ENCODE measurements at regions of chr4 and their contacts with region 1.

Region 1: GRCh38 chr4:25767877-25768725 is 94.7 kb downstream of the SEL1L3 start:
- DNase-seq: no peak
- H3K4me3 ChIP-seq: no peak overlapping the region
- CTCF ChIP-seq: peak; percentile 93

Region 2: GRCh38 chr4:25448379-25449109 is 319.6 kb before region 1 on chr4:
- CTCF ChIA-PET with region 1: interaction called, 464 read pairs
- POLR2A ChIA-PET with region 1: no interaction called
- DNase-seq: peak; percentile 44
- H3K4me3 ChIP-seq: no peak overlapping the region
- CTCF ChIP-seq: no peak

Region 3: GRCh38 chr4:25750874-25751273 is 17.2 kb before region 1 on chr4:
- CTCF ChIA-PET with region 1: interaction called, 27 read pairs
- POLR2A ChIA-PET with region 1: no interaction called
- DNase-seq: no peak
- H3K4me3 ChIP-seq: no peak overlapping the region
- CTCF ChIP-seq: no peak

Region 4: DNA sequence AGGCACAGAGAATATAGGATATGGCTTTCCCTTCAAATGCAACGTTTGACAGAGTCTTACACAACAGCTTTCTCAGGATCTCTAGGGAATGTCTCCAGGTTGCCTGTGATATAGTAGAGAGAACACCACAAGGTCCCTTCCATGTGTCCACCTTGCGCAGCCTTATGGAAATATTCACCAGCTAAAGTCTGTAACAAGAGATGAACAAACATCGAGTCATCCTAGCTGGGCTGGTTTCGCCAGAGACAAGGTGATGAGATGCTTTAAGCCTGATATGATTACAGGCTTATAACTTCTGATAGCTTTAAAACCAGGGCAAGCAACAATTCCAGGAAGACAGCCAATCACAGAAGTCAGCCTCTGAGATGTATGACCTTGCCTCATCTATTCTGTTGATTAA is 10.9 kb after region 1 on chr4:
- CTCF ChIA-PET with region 1: interaction called, 18 read pairs
- POLR2A ChIA-PET with region 1: no interaction called
- DNase-seq: no peak
- H3K4me3 ChIP-seq: no peak overlapping the region
- CTCF ChIP-seq: no peak

Region 5: DNA sequence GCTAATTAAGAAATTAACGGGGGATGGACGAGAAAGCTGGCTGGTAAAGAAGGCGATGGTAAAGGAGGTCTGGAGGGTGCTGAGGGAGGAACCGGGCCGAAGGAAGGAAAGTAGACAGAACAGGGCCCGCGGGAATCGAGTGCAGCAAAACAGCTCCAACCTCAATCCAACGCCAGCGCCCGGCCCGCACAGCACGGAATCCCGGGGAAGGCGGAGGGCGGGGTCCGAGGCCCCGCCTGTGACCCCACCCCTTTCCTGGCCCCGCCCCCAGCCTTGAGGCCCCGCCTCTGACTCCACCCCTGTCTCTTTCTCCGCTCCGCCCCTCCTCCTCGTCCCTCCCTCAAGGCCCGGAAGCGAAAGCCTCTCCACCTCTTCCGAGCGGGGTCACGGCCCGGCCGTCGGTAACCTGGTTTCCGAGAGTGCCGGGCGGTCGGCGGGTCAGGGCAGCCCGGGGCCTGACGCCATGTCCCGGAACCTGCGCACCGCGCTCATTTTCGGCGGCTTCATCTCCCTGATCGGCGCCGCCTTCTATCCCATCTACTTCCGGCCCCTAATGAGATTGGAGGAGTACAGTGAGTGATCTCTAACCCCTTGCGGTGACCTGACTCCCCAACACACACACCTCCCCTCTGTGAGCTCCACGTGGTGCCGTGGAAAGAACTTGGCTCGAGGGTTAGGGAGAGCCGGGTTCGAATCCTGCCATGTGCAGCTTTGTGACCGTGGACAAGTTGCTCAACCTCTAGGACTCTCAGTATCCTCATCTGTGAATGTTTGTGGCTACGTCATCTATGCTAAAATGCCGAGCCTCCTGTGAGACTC is 146.0 kb after region 1 on chr4 and contains the start of gene SMIM20:
- CTCF ChIA-PET with region 1: interaction called, 12 read pairs
- POLR2A ChIA-PET with region 1: interaction called, 3 read pairs
- DNase-seq: peak; percentile 23
- H3K4me3 ChIP-seq: peak within 1 kb of the TSS; percentile 89
- CTCF ChIP-seq: no peak

Region 6: GRCh38 chr4:26034849-26035248 is 266.7 kb after region 1 on chr4:
- CTCF ChIA-PET with region 1: no interaction called
- POLR2A ChIA-PET with region 1: no interaction called
- DNase-seq: no peak
- H3K4me3 ChIP-seq: no peak overlapping the region
- CTCF ChIP-seq: no peak